HepG2 (cell line): ENCODE measurements at regions of chr7 and their contacts with region 1.

Region 1: GRCh38 chr7:22499044-22499443 is 944 bp downstream of the STEAP1B start:
- DNase-seq: no peak
- ATAC-seq: no peak
- H3K4me3 ChIP-seq: no peak overlapping the region
- H3K27ac ChIP-seq: no peak overlapping the region
- H3K4me1 ChIP-seq: no peaks in the 10 kb centered on the region
- H3K27me3 ChIP-seq: no peaks in the 10 kb centered on the region
- CTCF ChIP-seq: no peak
- EP300 ChIP-seq: no peak
- POLR2A ChIP-seq: no peak
- RAD21 ChIP-seq: no peak

Region 2: DNA sequence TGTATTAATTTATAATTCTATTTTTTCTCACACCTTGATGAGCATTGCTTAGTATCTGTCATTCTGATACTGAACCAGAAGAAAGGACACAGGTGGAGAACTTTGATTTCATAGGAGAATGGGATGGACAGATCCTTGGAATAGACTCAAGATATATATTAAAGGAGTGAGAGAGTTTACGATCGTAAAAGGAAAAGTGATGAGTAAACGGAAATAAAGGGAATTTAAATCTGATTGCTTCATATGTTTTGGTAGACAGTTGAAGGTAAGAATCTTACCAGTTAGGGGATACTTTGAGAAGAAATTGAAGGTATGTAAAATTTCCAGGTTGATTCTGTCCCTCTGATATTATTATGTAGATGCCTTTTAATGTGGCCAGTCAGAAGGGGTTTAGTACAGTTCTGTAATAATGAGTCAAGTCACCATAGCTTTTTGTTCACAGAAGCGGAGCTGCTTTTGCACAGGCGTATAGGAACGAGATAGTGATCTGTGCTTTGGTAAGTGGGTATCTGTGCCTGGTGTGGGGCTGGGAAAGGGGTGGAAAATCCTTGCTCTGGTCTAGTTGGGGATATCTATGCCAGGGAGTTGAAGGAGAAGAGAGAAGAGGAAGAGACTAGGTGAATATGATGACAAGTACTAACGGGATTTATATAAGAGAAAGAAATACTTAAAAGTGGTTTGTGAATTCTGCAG is 1055.7 kb before region 1 on chr7:
- CTCF ChIA-PET with region 1: no interaction called
- POLR2A ChIA-PET with region 1: no interaction called
- in situ Hi-C with region 1: no loop called
- intact Hi-C with region 1: no loop called
- DNase-seq: no peak
- ATAC-seq: no peak
- H3K4me3 ChIP-seq: no peak overlapping the region
- H3K27ac ChIP-seq: no peak overlapping the region
- H3K4me1 ChIP-seq: no peaks in the 10 kb centered on the region
- H3K27me3 ChIP-seq: no peaks in the 10 kb centered on the region
- CTCF ChIP-seq: no peak
- EP300 ChIP-seq: no peak
- POLR2A ChIP-seq: no peak
- RAD21 ChIP-seq: no peak

Region 3: GRCh38 chr7:22103255-22103969 is 395.6 kb before region 1 on chr7:
- CTCF ChIA-PET with region 1: interaction called, 7 read pairs
- POLR2A ChIA-PET with region 1: no interaction called
- in situ Hi-C with region 1: no loop called
- intact Hi-C with region 1: loop called (anchors 1 kb)
- DNase-seq: peak; percentile 64
- ATAC-seq: peak; percentile 75
- H3K4me3 ChIP-seq: no peak overlapping the region
- H3K27ac ChIP-seq: no peak overlapping the region
- H3K4me1 ChIP-seq: no peaks in the 10 kb centered on the region
- H3K27me3 ChIP-seq: peaks cover 0 to 14% of the 10 kb centered on the region in 2 experiments; a peak in 2 of 5 replicates
- CTCF ChIP-seq: peak; percentile 76
- EP300 ChIP-seq: no peak
- POLR2A ChIP-seq: no peak
- RAD21 ChIP-seq: peak; percentile 51

Region 4: GRCh38 chr7:22110227-22110839 is 388.7 kb before region 1 on chr7:
- CTCF ChIA-PET with region 1: interaction called, 8 read pairs
- POLR2A ChIA-PET with region 1: no interaction called
- in situ Hi-C with region 1: no loop called
- intact Hi-C with region 1: loop called (anchors 2 kb)
- DNase-seq: peak; percentile 81
- ATAC-seq: peak; percentile 65
- H3K4me3 ChIP-seq: no peak overlapping the region
- H3K27ac ChIP-seq: peak overlapping the region; percentile 5
- H3K4me1 ChIP-seq: peaks cover 11% of the 10 kb centered on the region
- H3K27me3 ChIP-seq: no peaks in the 10 kb centered on the region
- CTCF ChIP-seq: peak; percentile 81
- EP300 ChIP-seq: no peak
- POLR2A ChIP-seq: no peak
- RAD21 ChIP-seq: peak; percentile 63